Mammary epithelial cell (primary cell): ENCODE measurements at regions of chr4 and their contacts with region 1.

Region 1: DNA sequence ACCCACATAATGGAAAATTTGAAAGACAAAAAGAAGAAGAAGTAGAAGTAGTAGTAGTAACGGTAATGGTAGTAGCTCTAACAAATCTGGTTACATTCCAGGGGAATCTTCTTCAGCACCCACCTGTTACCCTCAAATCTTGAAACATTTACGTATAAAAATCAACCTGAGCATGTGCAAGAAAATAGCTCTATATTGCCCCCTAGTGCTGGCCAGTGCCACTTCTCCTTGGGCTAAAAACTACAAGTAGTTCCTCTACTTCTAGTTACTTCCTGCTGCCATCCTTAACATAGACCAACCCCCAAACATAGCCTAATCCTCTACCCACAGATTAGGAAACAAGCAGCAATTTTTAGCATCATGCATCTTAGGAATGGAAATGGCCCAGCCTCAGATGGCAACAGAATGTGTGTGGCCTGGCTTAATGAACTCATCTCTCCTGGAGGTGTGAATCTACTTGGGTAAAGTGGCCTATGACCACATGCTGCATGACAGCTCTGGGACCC is 3.1 kb downstream of the PDGFC start:
- DNase-seq: peak; percentile 72
- H3K4me3 ChIP-seq: peak overlapping the region; percentile 60 to 90 (median 77)
- H3K27ac ChIP-seq: no peak overlapping the region
- H3K4me1 ChIP-seq: peaks cover 30% of the 10 kb centered on the region
- H3K27me3 ChIP-seq: no peaks in the 10 kb centered on the region
- CTCF ChIP-seq: peak; percentile 78 to 81

Region 2: GRCh38 chr4:155953151-155954114 is 1015.1 kb before region 1 on chr4 and contains the start of gene CTSO:
- CTCF ChIA-PET with region 1: no interaction called
- dilution Hi-C with region 1: no loop called
- in situ Hi-C with region 1: loop called in 1 of 2 experiments (anchors 25 kb)
- intact Hi-C with region 1: no loop called
- DNase-seq: peak; percentile 62
- H3K4me3 ChIP-seq: peak within 1 kb of the TSS; percentile 86 to 98 (median 92)
- H3K27ac ChIP-seq: peak within 1 kb of the TSS; percentile 81
- H3K4me1 ChIP-seq: peaks cover 6% of the 10 kb centered on the region
- H3K27me3 ChIP-seq: no peaks in the 10 kb centered on the region
- CTCF ChIP-seq: peak; percentile 28 to 64
- total RNA-seq, gene CTSO: 2.0 to 11.0 TPM

Region 3: DNA sequence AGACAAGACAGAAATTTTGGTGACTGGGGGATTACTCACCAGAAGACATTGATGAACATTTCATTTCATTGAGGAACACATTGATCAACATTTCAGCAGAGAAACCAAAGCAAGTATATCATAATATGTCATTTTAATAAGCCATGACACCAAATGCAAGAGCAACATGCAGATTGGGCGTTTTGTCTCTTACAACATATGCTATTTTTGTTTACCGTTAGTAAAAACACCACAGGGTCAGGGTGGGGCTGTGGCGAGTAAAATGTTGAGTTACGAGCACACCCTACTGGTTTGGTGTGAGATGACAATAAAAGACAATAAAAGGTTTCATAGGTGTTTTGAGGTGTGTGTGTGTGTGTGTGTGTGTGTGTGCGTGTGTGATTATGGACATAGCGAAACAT is 291.4 kb before region 1 on chr4:
- CTCF ChIA-PET with region 1: no interaction called
- dilution Hi-C with region 1: no loop called
- in situ Hi-C with region 1: no loop called
- intact Hi-C with region 1: loop called (anchors 5 kb)
- DNase-seq: no peak
- H3K4me3 ChIP-seq: no peak overlapping the region
- H3K27ac ChIP-seq: no peak overlapping the region
- H3K4me1 ChIP-seq: peaks cover 4% of the 10 kb centered on the region
- H3K27me3 ChIP-seq: no peaks in the 10 kb centered on the region
- CTCF ChIP-seq: peak in 1 of 2 donors; percentile 31

Region 4: GRCh38 chr4:156829201-156829873 is 139.2 kb before region 1 on chr4:
- CTCF ChIA-PET with region 1: no interaction called
- dilution Hi-C with region 1: no loop called
- in situ Hi-C with region 1: no loop called
- intact Hi-C with region 1: loop called (anchors 5 kb)
- DNase-seq: peak; percentile 12
- H3K4me3 ChIP-seq: peak overlapping the region in 1 of 3 experiments; percentile 20
- H3K27ac ChIP-seq: peak overlapping the region; percentile 68
- H3K4me1 ChIP-seq: peaks cover 29% of the 10 kb centered on the region
- H3K27me3 ChIP-seq: no peaks in the 10 kb centered on the region
- CTCF ChIP-seq: no peak

Region 5: DNA sequence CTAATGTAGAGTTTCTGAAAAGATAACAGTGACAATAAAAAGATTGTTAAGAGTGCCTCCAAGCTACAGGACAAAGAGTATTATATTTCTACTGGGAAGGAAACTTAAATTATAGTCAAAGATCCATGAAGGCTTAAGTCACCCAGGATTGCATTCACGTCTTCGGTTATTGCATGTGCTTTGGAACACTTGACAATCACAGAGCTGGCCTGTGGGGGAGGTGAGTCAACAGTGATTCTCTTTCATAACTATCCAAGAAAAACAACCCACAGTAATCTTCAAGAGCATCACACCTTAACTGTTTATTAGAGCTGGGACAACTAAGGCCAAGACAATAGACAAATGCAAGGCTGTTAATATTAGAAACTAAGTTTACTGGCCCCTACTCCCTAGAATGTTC is 37.3 kb before region 1 on chr4:
- CTCF ChIA-PET with region 1: interaction called, 17 read pairs
- dilution Hi-C with region 1: no loop called
- in situ Hi-C with region 1: no loop called
- intact Hi-C with region 1: loop called (anchors 1 kb)
- DNase-seq: peak; percentile 93
- H3K4me3 ChIP-seq: no peak overlapping the region
- H3K27ac ChIP-seq: peak overlapping the region; percentile 97
- H3K4me1 ChIP-seq: peaks cover 46% of the 10 kb centered on the region
- H3K27me3 ChIP-seq: no peaks in the 10 kb centered on the region
- CTCF ChIP-seq: no peak

Region 6: GRCh38 chr4:157128395-157128794 is 159.9 kb after region 1 on chr4:
- CTCF ChIA-PET with region 1: no interaction called
- dilution Hi-C with region 1: no loop called
- in situ Hi-C with region 1: no loop called
- intact Hi-C with region 1: loop called (anchors 1 kb)
- DNase-seq: peak; percentile 36
- H3K4me3 ChIP-seq: no peak overlapping the region
- H3K27ac ChIP-seq: no peak overlapping the region
- H3K4me1 ChIP-seq: no peaks in the 10 kb centered on the region
- H3K27me3 ChIP-seq: no peaks in the 10 kb centered on the region
- CTCF ChIP-seq: peak; percentile 39 to 68

Region 7: GRCh38 chr4:157978680-157979361 is 1010.3 kb after region 1 on chr4:
- CTCF ChIA-PET with region 1: no interaction called
- dilution Hi-C with region 1: no loop called
- in situ Hi-C with region 1: no loop called
- intact Hi-C with region 1: loop called (anchors 5 kb)
- DNase-seq: peak; percentile 44
- H3K4me3 ChIP-seq: no peak overlapping the region
- H3K27ac ChIP-seq: no peak overlapping the region
- H3K4me1 ChIP-seq: no peaks in the 10 kb centered on the region
- H3K27me3 ChIP-seq: peaks cover 2% of the 10 kb centered on the region
- CTCF ChIP-seq: peak; percentile 81 to 85